SK-N-SH (cell line): ENCODE measurements at regions of chr16 and their contacts with region 1.

Region 1: DNA sequence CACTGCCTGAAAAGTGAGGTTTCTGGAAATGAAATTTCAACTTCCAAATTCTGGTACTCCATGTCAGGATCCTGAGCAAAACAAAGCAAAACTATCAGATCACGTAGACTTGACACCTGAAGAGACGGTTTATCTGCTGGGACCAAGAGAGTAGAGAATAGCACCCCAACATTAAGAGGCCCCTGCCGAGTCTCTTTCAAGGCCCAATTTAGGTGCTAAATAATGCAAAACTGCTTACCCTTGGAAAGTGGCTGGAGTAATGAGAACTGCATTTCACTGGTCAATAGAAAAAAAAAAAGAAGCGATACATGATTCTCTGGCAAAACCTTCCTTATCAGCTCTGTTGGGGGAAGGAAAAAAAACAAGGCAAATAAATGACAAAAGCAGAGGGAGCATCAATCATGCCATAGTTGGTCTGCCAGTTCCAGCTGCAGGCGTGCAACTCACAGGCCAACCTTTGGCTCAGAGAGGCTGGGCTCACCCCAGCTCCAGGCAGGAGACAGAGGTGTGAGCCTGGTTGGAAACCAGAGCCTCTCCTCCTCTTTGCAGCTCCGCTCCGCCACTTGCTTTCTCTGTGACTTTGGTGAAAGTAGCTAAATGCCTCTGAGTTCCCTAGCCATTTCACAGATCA is 595.2 kb downstream of the TOX3 start:
- DNase-seq: no peak
- H3K4me3 ChIP-seq: no peak overlapping the region
- H3K27ac ChIP-seq: peak overlapping the region in 1 of 2 experiments; percentile 11; a peak in 1 of 4 replicates
- H3K4me1 ChIP-seq: peaks cover 0 to 26% of the 10 kb centered on the region in 2 experiments; a peak in 2 of 4 replicates
- H3K27me3 ChIP-seq: no peaks in the 10 kb centered on the region
- CTCF ChIP-seq: no peak
- EP300 ChIP-seq: no peak
- RAD21 ChIP-seq: no peak

Region 2: GRCh38 chr16:51939378-51939871 is 12.4 kb before region 1 on chr16:
- CTCF ChIA-PET with region 1: interaction called, 6 read pairs
- POLR2A ChIA-PET with region 1: interaction called, 13 read pairs
- DNase-seq: peak; percentile 68
- H3K4me3 ChIP-seq: no peak overlapping the region
- H3K27ac ChIP-seq: peak overlapping the region in 1 of 2 experiments; percentile 88; a peak in 2 of 4 replicates
- H3K4me1 ChIP-seq: peaks cover 0 to 19% of the 10 kb centered on the region in 2 experiments; a peak in 2 of 4 replicates
- H3K27me3 ChIP-seq: no peaks in the 10 kb centered on the region
- CTCF ChIP-seq: no peak
- EP300 ChIP-seq: peak in 1 of 2 experiments; percentile 93; a peak in 2 of 4 replicates
- RAD21 ChIP-seq: peak; percentile 27; the same call in 1 of the 2 replicates

Region 3: DNA sequence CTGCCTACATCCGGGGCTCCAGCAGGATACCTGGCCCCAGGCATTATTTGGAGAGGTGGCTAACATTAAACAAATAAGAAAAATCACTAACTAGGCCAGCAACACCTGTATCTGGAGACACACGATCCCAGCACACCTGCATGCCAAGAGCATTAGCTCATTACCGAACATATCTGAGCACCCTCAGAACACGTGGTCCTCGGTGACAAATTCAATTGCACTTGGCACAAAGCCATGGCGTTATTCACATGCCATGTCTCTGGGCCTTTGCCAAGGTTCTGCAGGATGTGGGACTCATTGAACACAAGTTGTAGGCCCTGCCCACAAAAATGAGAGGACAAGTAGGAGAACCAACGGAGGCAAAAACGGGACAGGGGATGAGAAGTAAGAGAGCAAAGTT is 42.8 kb after region 1 on chr16:
- CTCF ChIA-PET with region 1: no interaction called
- POLR2A ChIA-PET with region 1: no interaction called
- DNase-seq: no peak
- H3K4me3 ChIP-seq: no peak overlapping the region
- H3K27ac ChIP-seq: no peak overlapping the region
- H3K4me1 ChIP-seq: peaks cover 0 to 5% of the 10 kb centered on the region in 2 experiments; a peak in 1 of 4 replicates
- H3K27me3 ChIP-seq: no peaks in the 10 kb centered on the region
- CTCF ChIP-seq: no peak
- EP300 ChIP-seq: no peak
- RAD21 ChIP-seq: no peak

Region 4: DNA sequence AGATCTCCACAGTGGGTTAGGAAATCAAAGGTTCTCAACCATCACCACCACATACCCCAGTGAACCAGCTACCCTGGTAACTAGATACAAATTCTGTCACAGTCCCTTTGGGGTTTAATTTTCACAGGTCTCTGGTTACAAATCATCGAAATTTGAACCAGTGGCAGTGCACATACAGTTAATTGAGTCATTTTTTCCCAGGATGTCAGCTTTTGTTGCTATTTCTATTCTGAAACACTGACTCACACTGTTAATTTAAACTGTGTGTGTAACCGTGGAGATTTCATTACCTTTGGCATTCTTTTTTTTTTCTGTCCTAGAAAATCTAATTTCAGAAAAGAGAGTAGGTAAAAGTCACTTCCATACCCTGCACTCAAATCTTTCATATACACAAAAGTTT is 83.7 kb after region 1 on chr16:
- CTCF ChIA-PET with region 1: no interaction called
- POLR2A ChIA-PET with region 1: no interaction called
- DNase-seq: no peak
- H3K4me3 ChIP-seq: no peak overlapping the region
- H3K27ac ChIP-seq: no peak overlapping the region
- H3K4me1 ChIP-seq: no peaks in the 10 kb centered on the region
- H3K27me3 ChIP-seq: no peaks in the 10 kb centered on the region
- CTCF ChIP-seq: no peak
- EP300 ChIP-seq: no peak
- RAD21 ChIP-seq: no peak